T-cell (primary cell): ENCODE measurements at regions of chr15 and their contacts with region 1.

Region 1: GRCh38 chr15:42184296-42184695 is 23.8 kb downstream of the VPS39 start:
- DNase-seq: no peak
- ATAC-seq: no peak
- H3K4me3 ChIP-seq: no peak overlapping the region
- H3K4me3 Mint-ChIP-seq: no peak overlapping the region
- H3K27ac ChIP-seq: no peak overlapping the region
- H3K27ac Mint-ChIP-seq: no peak overlapping the region
- H3K4me1 ChIP-seq: no peaks in the 10 kb centered on the region
- H3K4me1 Mint-ChIP-seq: no peaks in the 10 kb centered on the region
- H3K27me3 ChIP-seq: no peaks in the 10 kb centered on the region
- H3K27me3 Mint-ChIP-seq: no peaks in the 10 kb centered on the region

Region 2: GRCh38 chr15:43048935-43049334 is 864.6 kb after region 1 on chr15:
- CTCF ChIA-PET with region 1: interaction called in 1 of 2 experiments, 10 read pairs
- POLR2A ChIA-PET with region 1: no interaction called
- DNase-seq: no peak
- ATAC-seq: no peak
- H3K4me3 ChIP-seq: no peak overlapping the region
- H3K4me3 Mint-ChIP-seq: no peak overlapping the region
- H3K27ac ChIP-seq: no peak overlapping the region
- H3K27ac Mint-ChIP-seq: no peak overlapping the region
- H3K4me1 ChIP-seq: no peaks in the 10 kb centered on the region
- H3K4me1 Mint-ChIP-seq: peaks cover 0 to 7% (median 0%) of the 10 kb centered on the region in 3 donors
- H3K27me3 ChIP-seq: no peaks in the 10 kb centered on the region
- H3K27me3 Mint-ChIP-seq: no peaks in the 10 kb centered on the region